Activated T-helper 1 cell treated with anti-CD3 and anti-CD28 coated beads, Interleukin-12 subunit alpha, Interleukin-12 subunit beta, Interleukin-2, Interleukin-4 antibody, amounts not matched to agents 30 ng/mL and 10 ng/mL and 1 ng/mL, durations not matched to agents 14 hours and 24 hours and 36 hours (primary cell): ENCODE measurements at regions of chr17 and their contacts with region 1.

Region 1: DNA sequence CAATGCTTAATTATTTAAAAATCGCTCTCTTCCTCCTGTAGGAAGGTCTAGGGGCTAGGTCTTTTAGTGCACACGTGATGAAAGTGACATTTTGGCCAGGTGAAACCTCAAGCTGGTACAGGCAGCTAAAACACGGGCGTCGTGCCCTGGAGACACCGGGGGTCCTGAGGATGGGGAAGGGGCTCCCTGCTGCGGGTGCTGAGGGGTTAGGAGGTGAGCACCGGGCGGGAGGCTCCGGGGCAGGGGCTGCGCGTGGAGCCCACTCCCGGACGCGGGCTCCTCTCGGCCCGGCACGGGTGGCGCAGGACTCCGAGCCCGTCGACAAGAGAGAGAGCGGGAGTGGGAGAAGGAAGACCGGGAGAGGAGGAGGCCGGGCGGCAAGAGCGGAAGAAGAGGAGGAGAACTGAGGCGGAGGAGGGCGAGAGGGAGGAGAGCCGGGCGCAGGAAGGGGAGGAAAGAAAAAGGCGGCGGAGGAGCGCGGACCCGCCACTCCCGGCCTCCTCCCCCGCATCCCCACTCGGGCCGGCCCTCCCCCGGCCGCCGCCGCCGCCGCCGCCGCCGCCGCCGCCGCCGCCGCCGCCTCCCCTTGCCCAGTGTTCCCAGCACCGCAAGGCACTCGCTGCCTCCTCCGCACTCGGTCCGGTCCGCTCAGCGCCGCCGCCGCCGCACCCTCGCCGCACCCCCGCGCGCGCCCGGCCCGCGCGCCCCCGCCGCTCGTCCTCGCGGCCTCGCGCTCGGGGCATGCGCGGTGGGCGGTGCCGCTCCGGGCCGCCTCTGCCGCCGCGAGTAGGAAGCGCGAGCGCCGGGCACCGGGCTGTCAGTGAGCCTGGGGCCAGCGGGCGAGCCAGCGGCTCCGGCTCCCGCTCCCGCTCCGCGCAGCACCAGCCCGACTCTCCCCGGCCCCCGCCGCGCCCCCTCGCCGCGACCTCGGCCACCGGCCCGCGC is at the start of gene PRKCA:
- DNase-seq: peak; percentile 77
- H3K4me3 Mint-ChIP-seq: peak within 1 kb of the TSS; percentile 100
- H3K27ac Mint-ChIP-seq: peak within 1 kb of the TSS; percentile 99
- H3K4me1 Mint-ChIP-seq: peaks cover 48% of the 10 kb centered on the region
- H3K27me3 Mint-ChIP-seq: peaks cover 9% of the 10 kb centered on the region
- total RNA-seq, gene PRKCA: 155 and 157 TPM in 2 replicates

Region 2: GRCh38 chr17:66191593-66192382 is 110.3 kb before region 1 on chr17 and contains the start of gene CEP112:
- intact Hi-C with region 1: loop called (anchors 5 kb)
- DNase-seq: peak; percentile 81
- H3K4me3 Mint-ChIP-seq: peak within 1 kb of the TSS; percentile 80
- H3K27ac Mint-ChIP-seq: peak within 1 kb of the TSS; percentile 70
- H3K4me1 Mint-ChIP-seq: peaks cover 15% of the 10 kb centered on the region
- H3K27me3 Mint-ChIP-seq: peaks cover 6% of the 10 kb centered on the region
- total RNA-seq, gene CEP112: 1.3 and 1.7 TPM in 2 replicates

Region 3: DNA sequence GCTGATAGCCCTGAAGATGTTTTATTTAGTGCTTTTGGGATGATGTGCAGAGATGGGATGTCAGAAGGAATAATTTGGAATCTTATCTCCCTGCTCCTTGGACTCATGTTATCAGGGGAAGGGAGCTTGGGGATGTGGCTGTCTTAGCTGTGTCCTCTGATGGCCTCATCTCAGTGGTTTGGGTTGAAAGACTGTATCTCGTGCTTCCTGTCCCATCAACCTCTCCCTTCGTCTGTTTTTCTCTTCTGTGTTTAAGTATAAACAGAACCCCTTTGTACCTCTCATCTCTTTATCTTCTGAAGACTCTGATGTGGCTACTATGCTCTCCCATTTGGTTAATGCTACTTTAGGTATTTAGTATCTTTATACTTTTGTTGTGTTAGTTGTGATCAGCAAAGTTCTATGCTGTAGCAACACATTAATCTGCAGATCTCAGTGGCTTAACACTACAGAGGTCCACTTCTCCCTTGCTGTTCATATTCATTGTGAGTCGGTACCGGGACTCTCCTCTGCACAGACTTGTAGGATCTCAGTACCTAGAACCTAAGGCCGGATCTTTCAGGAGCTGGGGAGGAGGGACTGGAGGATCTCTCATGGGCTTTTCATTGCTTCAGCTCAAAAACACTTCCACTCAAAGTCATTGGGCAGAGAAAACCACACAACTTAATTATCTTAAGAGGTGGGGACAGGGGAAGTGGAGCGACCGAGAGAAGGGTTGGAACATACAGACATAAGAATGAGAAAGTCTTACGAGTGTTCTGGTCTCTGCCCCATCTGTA is 29.2 kb after region 1 on chr17:
- intact Hi-C with region 1: loop called (anchors 2 kb)
- DNase-seq: peak; percentile 17
- H3K4me3 Mint-ChIP-seq: peak overlapping the region; percentile 70
- H3K27ac Mint-ChIP-seq: peak overlapping the region; percentile 91
- H3K4me1 Mint-ChIP-seq: peaks cover 68% of the 10 kb centered on the region
- H3K27me3 Mint-ChIP-seq: no peaks in the 10 kb centered on the region

Region 4: GRCh38 chr17:66373944-66374817 is 72.1 kb after region 1 on chr17:
- intact Hi-C with region 1: loop called (anchors 2 kb)
- DNase-seq: no peak
- H3K4me3 Mint-ChIP-seq: peak overlapping the region; percentile 30
- H3K27ac Mint-ChIP-seq: peak overlapping the region; percentile 61
- H3K4me1 Mint-ChIP-seq: peaks cover 64% of the 10 kb centered on the region
- H3K27me3 Mint-ChIP-seq: no peaks in the 10 kb centered on the region

Region 5: GRCh38 chr17:66466840-66467367 is 164.8 kb after region 1 on chr17:
- intact Hi-C with region 1: loop called (anchors 1 kb)
- DNase-seq: peak; percentile 55
- H3K4me3 Mint-ChIP-seq: peak overlapping the region; percentile 63
- H3K27ac Mint-ChIP-seq: peak overlapping the region; percentile 95
- H3K4me1 Mint-ChIP-seq: peaks cover 79% of the 10 kb centered on the region
- H3K27me3 Mint-ChIP-seq: no peaks in the 10 kb centered on the region

Region 6: GRCh38 chr17:66567234-66568170 is 265.4 kb after region 1 on chr17:
- intact Hi-C with region 1: loop called (anchors 5 kb)
- DNase-seq: peak; percentile 63
- H3K4me3 Mint-ChIP-seq: no peak overlapping the region
- H3K27ac Mint-ChIP-seq: peak overlapping the region; percentile 25
- H3K4me1 Mint-ChIP-seq: peaks cover 37% of the 10 kb centered on the region
- H3K27me3 Mint-ChIP-seq: no peaks in the 10 kb centered on the region

Region 7: GRCh38 chr17:66764559-66764958 is 462.5 kb after region 1 on chr17:
- intact Hi-C with region 1: no loop called
- DNase-seq: no peak
- H3K4me3 Mint-ChIP-seq: no peak overlapping the region
- H3K27ac Mint-ChIP-seq: no peak overlapping the region
- H3K4me1 Mint-ChIP-seq: peaks cover 14% of the 10 kb centered on the region
- H3K27me3 Mint-ChIP-seq: no peaks in the 10 kb centered on the region

Region 8: DNA sequence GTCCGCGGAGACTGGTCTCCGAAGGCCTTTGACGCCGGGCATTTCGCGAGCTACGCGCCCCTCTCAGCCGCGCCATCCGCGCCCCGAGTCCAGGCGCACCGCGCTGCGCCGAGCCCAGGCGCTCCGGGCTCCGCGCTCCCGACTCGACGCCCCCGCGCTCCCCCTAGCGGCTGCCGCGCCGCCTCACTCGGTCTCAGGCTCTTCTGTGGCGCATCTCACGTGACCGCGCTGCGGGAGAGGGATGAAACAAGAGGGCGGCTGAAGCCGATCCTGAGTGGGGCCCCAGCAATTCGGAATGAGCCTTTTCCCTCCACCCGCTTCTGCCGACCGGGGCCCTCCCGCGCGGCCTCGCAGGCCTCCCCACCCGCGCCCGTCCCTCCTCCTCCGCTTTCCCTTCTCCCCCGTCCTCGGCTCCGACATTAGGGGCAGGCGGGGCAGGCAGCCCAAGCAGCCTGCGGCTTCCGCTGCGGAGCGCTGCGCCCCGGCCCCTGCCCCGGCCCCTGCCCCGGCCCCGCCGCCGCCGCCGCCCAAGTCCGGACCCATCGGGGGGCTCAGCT is 1903.3 kb after region 1 on chr17:
- intact Hi-C with region 1: loop called (anchors 5 kb)
- DNase-seq: peak; percentile 90
- H3K4me3 Mint-ChIP-seq: peak overlapping the region; percentile 90
- H3K27ac Mint-ChIP-seq: peak overlapping the region; percentile 75
- H3K4me1 Mint-ChIP-seq: peaks cover 33% of the 10 kb centered on the region
- H3K27me3 Mint-ChIP-seq: peaks cover 12% of the 10 kb centered on the region